PC-3 (cell line): ENCODE measurements at regions of chr5 and their contacts with region 1.

Region 1: DNA sequence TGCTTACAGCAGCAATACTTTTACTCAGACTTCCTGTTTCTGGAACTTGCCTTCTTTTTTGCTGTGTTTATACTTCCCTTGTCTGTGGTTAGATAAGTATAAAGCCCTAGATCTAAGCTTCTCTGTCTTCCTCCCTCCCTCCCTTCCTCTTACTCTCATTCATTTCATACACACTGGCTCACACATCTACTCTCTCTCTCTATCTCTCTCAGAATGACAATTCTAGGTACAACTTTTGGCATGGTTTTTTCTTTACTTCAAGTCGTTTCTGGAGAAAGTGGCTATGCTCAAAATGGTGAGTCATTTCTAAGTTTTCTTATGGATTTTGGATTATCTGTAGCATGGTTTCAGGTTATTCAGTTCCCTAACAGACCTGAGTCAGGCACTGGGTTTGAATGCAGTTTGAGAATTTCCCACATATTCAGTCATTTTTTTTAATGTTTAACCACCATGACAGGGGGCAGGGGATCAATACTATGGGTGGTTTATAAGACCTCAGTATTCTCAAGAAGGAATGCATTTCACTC is at the start of gene IL7R:
- DNase-seq: peak; percentile 54
- ATAC-seq: peak; percentile 37
- H3K4me3 ChIP-seq: peak within 1 kb of the TSS; percentile 54
- H3K27ac ChIP-seq: peak within 1 kb of the TSS; percentile 91
- H3K4me1 ChIP-seq: peaks cover 65% of the 10 kb centered on the region
- H3K27me3 ChIP-seq: no peaks in the 10 kb centered on the region
- CTCF ChIP-seq: no peak
- total RNA-seq, gene IL7R: 7.1 and 7.4 TPM in 2 replicates

Region 2: GRCh38 chr5:35617435-35618303 is 239.2 kb before region 1 on chr5 and contains the start of gene SPEF2:
- CTCF ChIA-PET with region 1: no interaction called
- POLR2A ChIA-PET with region 1: no interaction called
- intact Hi-C with region 1: loop called (anchors 5 kb)
- DNase-seq: peak; percentile 92
- ATAC-seq: peak; percentile 98
- H3K4me3 ChIP-seq: peak within 1 kb of the TSS; percentile 92
- H3K27ac ChIP-seq: no peak within 1 kb of the TSS
- H3K4me1 ChIP-seq: peaks cover 9% of the 10 kb centered on the region
- H3K27me3 ChIP-seq: no peaks in the 10 kb centered on the region
- CTCF ChIP-seq: peak; percentile 91
- total RNA-seq, gene SPEF2: 2.3 and 2.7 TPM in 2 replicates

Region 3: GRCh38 chr5:35651002-35651756 is 205.6 kb before region 1 on chr5:
- CTCF ChIA-PET with region 1: no interaction called
- POLR2A ChIA-PET with region 1: no interaction called
- intact Hi-C with region 1: loop called (anchors 5 kb)
- DNase-seq: peak; percentile 82
- ATAC-seq: peak; percentile 99
- H3K4me3 ChIP-seq: no peak overlapping the region
- H3K27ac ChIP-seq: no peak overlapping the region
- H3K4me1 ChIP-seq: no peaks in the 10 kb centered on the region
- H3K27me3 ChIP-seq: no peaks in the 10 kb centered on the region
- CTCF ChIP-seq: peak; percentile 88

Region 4: DNA sequence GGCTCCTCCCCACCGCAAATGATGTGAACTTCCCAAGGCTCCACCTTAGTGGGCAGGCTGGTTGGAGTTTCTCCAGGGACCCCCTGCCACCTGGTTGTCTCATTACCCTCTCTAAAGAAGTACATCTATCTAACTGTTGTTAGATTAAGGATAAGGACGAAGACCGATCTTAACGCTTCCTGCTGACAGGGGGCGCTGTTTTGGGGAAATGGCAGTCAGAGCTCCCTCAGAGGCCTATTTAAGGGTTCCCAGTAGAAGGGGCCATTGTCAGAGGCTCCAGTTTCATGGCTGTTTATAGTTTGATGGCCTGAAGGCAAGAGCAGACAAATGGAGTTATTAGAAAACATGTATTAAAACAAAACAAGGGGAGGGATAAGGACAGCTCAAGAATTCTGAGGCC is 139.1 kb before region 1 on chr5:
- CTCF ChIA-PET with region 1: no interaction called
- POLR2A ChIA-PET with region 1: no interaction called
- intact Hi-C with region 1: loop called (anchors 2 kb)
- DNase-seq: no peak
- ATAC-seq: no peak
- H3K4me3 ChIP-seq: no peak overlapping the region
- H3K27ac ChIP-seq: no peak overlapping the region
- H3K4me1 ChIP-seq: no peaks in the 10 kb centered on the region
- H3K27me3 ChIP-seq: no peaks in the 10 kb centered on the region
- CTCF ChIP-seq: no peak

Region 5: DNA sequence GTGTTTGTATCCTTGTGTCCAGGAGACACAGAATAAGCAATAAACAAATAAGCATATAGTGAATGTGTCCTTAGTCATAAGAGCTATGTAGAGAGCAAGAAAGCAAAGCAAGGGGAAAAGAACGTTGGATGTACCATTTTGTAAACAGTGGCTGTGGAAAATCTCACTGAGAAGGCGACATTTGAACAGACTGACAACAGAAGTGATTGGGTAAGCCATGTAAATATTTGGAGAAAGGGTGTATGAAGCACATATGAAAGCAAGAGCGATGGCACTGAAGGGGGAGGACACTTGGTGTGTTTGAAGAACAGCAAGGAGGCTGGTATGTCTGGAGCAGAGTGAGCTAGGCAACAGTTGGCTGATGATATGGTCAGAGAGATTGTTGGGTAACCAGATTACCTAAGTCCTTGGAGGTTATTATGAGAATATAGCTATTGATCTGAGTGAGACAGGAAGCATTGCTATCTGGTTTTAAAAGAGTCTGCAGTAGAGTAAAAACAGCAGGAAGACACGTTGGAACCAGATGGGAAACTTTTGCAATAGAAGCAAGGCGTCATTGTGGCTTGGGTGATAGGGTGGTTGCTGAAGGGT is 115.6 kb before region 1 on chr5:
- CTCF ChIA-PET with region 1: interaction called, 3 read pairs
- POLR2A ChIA-PET with region 1: interaction called, 3 read pairs
- intact Hi-C with region 1: loop called (anchors 5 kb)
- DNase-seq: peak; percentile 65
- ATAC-seq: peak; percentile 62
- H3K4me3 ChIP-seq: peak overlapping the region; percentile 7; the same call in 1 of the 2 replicates
- H3K27ac ChIP-seq: peak overlapping the region; percentile 90
- H3K4me1 ChIP-seq: peaks cover 23% of the 10 kb centered on the region
- H3K27me3 ChIP-seq: no peaks in the 10 kb centered on the region
- CTCF ChIP-seq: no peak

Region 6: GRCh38 chr5:35777358-35778087 is 79.3 kb before region 1 on chr5:
- CTCF ChIA-PET with region 1: no interaction called
- POLR2A ChIA-PET with region 1: no interaction called
- intact Hi-C with region 1: loop called (anchors 2 kb)
- DNase-seq: peak; percentile 84
- ATAC-seq: peak; percentile 74
- H3K4me3 ChIP-seq: no peak overlapping the region
- H3K27ac ChIP-seq: no peak overlapping the region
- H3K4me1 ChIP-seq: peaks cover 20% of the 10 kb centered on the region
- H3K27me3 ChIP-seq: no peaks in the 10 kb centered on the region
- CTCF ChIP-seq: peak; percentile 70

Region 7: GRCh38 chr5:35919191-35919590 is 62.4 kb after region 1 on chr5:
- CTCF ChIA-PET with region 1: no interaction called
- POLR2A ChIA-PET with region 1: no interaction called
- intact Hi-C with region 1: loop called (anchors 1 kb)
- DNase-seq: peak; percentile 88
- ATAC-seq: peak; percentile 76
- H3K4me3 ChIP-seq: no peak overlapping the region
- H3K27ac ChIP-seq: no peak overlapping the region
- H3K4me1 ChIP-seq: peaks cover 27% of the 10 kb centered on the region
- H3K27me3 ChIP-seq: no peaks in the 10 kb centered on the region
- CTCF ChIP-seq: no peak

Region 8: DNA sequence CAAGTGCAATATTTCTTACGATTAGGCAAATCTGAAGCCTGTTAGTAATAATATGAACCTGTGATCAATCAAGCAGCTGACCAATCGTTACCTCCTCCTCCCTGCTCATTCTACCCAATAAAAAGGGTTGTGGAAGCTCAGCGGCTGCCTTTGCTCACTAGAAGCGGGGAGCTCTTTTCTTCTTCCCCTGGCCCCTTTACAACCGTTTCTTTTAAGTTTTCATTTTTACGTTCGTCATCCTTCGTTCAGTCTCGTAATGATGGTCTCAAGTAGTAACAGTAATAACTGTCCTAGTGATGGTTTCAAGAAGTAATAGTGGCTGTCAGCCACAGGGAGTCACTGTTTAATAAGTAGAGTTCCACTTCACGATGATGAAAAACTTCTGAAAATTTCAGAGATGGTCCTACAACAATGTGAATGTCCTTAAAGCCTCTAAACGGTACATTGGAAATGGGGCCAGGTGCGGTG is 203.6 kb after region 1 on chr5:
- CTCF ChIA-PET with region 1: no interaction called
- POLR2A ChIA-PET with region 1: no interaction called
- intact Hi-C with region 1: no loop called
- DNase-seq: peak; percentile 55
- ATAC-seq: peak; percentile 82
- H3K4me3 ChIP-seq: peak overlapping the region; percentile 15; the same call in 1 of the 2 replicates
- H3K27ac ChIP-seq: no peak overlapping the region
- H3K4me1 ChIP-seq: peaks cover 9% of the 10 kb centered on the region
- H3K27me3 ChIP-seq: peaks cover 17% of the 10 kb centered on the region
- CTCF ChIP-seq: peak; percentile 71